A673 (cell line): ENCODE measurements at regions of chr20 and their contacts with region 1.

Region 1: GRCh38 chr20:41889126-41889870 is 271.1 kb upstream of the CHD6 start:
- DNase-seq: peak; percentile 57
- H3K4me3 ChIP-seq: no peak overlapping the region
- H3K27ac ChIP-seq: no peak overlapping the region
- H3K4me1 ChIP-seq: no peaks in the 10 kb centered on the region
- H3K27me3 ChIP-seq: peaks cover 6% of the 10 kb centered on the region
- CTCF ChIP-seq: peak; percentile 28; the same call in 1 of the 2 replicates

Region 2: DNA sequence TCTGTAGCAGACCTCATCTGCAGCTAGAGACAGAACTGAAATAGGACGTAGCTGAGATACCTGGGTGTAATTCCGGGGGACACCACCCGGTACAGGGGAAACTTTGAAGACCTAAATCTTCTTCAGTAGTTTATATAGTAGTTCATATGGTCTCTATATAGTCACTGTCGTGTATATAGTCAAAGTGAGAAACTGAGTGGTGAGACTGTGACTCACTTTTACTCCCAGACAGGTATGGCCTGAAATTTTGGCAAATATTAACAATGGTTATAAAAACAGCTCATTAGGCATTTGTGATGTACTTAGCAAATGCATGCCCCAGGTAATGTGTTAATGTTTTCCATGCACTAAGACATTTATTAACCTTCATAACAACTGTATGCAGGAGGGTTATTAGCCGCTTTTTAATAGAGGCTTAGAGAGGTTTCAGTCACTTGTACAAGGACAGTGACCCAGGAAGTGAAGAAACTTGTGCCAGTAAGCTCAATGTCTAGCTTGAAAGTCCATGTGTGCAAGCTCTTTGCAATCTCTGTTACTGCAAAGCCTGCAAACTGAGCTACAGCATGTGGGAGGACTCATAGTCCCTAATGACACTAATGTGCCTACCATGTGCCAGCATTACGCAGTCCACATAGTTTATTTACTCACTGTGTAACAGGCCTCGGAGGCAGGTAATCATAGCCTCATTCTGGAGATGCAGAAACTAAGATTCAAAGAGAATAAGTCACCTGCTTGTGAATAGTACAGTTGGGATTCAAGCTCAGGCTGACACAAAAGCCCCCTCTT is 105.7 kb before region 1 on chr20:
- CTCF ChIA-PET with region 1: no interaction called
- POLR2A ChIA-PET with region 1: no interaction called
- intact Hi-C with region 1: no loop called
- DNase-seq: no peak
- H3K4me3 ChIP-seq: no peak overlapping the region
- H3K27ac ChIP-seq: no peak overlapping the region
- H3K4me1 ChIP-seq: no peaks in the 10 kb centered on the region
- H3K27me3 ChIP-seq: peaks cover 6% of the 10 kb centered on the region
- CTCF ChIP-seq: no peak

Region 3: GRCh38 chr20:41830702-41831101 is 58.6 kb before region 1 on chr20:
- CTCF ChIA-PET with region 1: no interaction called
- POLR2A ChIA-PET with region 1: no interaction called
- intact Hi-C with region 1: loop called (anchors 10 kb)
- DNase-seq: no peak
- H3K4me3 ChIP-seq: no peak overlapping the region
- H3K27ac ChIP-seq: no peak overlapping the region
- H3K4me1 ChIP-seq: no peaks in the 10 kb centered on the region
- H3K27me3 ChIP-seq: peaks cover 69% of the 10 kb centered on the region
- CTCF ChIP-seq: no peak